ENCODE measurements at regions of chr3 and their contacts with region 1.

Region 1: DNA sequence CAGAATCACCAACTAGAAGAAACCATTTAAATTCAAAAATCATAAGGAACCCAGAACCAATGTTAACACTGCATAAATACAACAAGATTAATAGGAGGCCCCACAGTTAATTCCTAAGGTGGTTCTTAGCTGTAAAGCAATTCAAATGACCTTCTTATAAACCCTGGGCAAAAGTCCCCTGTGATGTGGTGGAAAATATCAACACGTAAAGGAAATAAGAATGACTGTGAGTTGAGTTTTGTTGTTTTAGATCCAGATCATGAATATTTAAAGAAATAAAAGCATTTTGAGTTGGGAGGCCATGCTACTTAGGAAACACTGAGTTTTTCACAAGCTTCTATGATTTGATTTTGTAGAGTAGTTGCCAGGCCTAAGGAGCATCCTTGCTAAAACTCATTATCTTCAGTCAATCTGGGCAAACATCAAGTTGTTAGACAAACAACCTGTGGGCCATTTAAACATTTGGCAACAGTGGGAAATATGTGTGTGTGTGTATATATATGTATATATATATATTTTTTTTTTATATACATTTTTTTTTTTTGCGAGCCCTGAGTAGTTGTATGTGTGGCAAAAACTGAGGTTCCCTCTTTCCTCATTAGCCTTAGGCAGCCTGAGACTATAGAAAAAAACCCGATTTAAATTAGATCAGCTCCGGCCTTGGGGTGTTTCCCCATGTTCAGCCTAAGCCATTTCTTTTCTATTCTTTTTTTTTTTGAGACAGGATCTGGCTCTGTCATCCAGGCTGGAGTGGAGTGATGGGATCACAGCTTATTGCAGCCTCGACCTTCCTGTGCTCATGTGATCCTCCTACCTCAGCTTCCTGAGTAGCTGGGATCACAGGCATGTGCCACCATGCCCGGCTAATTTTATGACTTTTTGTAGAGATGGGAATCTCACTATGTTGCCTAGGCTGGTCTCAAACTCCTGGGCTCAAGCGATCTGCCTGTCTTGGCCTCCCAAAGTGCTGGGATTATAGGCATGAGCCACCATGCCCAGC is 8.0 kb upstream of the PXK start:
- DNase-seq: no peak
- H3K4me3 ChIP-seq: no peak overlapping the region
- H3K4me3 Mint-ChIP-seq: no peak overlapping the region
- H3K27ac ChIP-seq: no peak overlapping the region
- H3K27ac Mint-ChIP-seq: peak overlapping the region in 2 of 7 donors; percentile 10 to 11
- H3K4me1 ChIP-seq: no peaks in the 10 kb centered on the region
- H3K4me1 Mint-ChIP-seq: peaks cover 5% of the 10 kb centered on the region
- H3K27me3 ChIP-seq: no peaks in the 10 kb centered on the region
- H3K27me3 Mint-ChIP-seq: peaks cover 0 to 2% (median 0%) of the 10 kb centered on the region in 3 donors
- CTCF ChIP-seq: no peak

Region 2: DNA sequence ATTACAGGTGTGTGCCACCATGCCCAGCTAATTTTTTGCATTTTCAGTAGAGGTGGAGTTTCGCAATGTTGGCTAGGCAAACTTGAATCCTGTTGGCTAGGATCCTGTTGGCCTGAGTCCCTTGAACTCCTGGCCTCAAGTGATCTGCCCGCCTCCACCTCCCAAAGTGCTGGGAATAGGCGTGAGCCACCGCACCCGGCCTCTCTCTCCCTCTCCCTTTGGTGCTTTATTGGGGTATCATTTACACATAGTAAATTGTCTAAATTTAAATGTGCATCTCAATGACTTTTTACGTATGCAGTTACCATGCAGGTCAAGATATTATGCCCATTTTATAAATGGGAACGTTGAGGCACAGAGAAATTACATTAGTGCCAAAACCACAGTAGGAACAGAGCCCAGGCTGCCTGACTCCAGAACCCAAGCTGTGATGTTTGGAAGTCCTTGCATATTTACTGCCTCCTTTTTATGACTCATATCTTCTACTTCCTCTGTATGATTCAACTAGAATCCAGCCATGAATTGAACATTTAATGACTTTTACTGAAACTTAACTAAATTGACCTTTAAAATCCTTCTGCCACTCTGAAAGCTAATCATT is 52.7 kb before region 1 on chr3:
- intact Hi-C with region 1: no loop called
- DNase-seq: peak; percentile 57 to 71 (median 60)
- H3K4me3 ChIP-seq: no peak overlapping the region
- H3K4me3 Mint-ChIP-seq: no peak overlapping the region
- H3K27ac ChIP-seq: peak overlapping the region; percentile 38 to 75
- H3K27ac Mint-ChIP-seq: peak overlapping the region; percentile 78 to 91 (median 85)
- H3K4me1 ChIP-seq: peaks cover 28 to 33% of the 10 kb centered on the region in 2 donors
- H3K4me1 Mint-ChIP-seq: peaks cover 34% of the 10 kb centered on the region
- H3K27me3 ChIP-seq: no peaks in the 10 kb centered on the region
- H3K27me3 Mint-ChIP-seq: peaks cover 0 to 2% (median 0%) of the 10 kb centered on the region in 3 donors
- CTCF ChIP-seq: no peak

Region 3: GRCh38 chr3:58392181-58392580 is 67.5 kb after region 1 on chr3:
- intact Hi-C with region 1: no loop called
- DNase-seq: no peak
- H3K4me3 ChIP-seq: no peak overlapping the region
- H3K4me3 Mint-ChIP-seq: no peak overlapping the region
- H3K27ac ChIP-seq: no peak overlapping the region
- H3K27ac Mint-ChIP-seq: no peak overlapping the region
- H3K4me1 ChIP-seq: peaks cover 3 to 5% of the 10 kb centered on the region in 2 donors
- H3K4me1 Mint-ChIP-seq: peaks cover 17% of the 10 kb centered on the region
- H3K27me3 ChIP-seq: no peaks in the 10 kb centered on the region
- H3K27me3 Mint-ChIP-seq: no peaks in the 10 kb centered on the region
- CTCF ChIP-seq: no peak

Region 4: DNA sequence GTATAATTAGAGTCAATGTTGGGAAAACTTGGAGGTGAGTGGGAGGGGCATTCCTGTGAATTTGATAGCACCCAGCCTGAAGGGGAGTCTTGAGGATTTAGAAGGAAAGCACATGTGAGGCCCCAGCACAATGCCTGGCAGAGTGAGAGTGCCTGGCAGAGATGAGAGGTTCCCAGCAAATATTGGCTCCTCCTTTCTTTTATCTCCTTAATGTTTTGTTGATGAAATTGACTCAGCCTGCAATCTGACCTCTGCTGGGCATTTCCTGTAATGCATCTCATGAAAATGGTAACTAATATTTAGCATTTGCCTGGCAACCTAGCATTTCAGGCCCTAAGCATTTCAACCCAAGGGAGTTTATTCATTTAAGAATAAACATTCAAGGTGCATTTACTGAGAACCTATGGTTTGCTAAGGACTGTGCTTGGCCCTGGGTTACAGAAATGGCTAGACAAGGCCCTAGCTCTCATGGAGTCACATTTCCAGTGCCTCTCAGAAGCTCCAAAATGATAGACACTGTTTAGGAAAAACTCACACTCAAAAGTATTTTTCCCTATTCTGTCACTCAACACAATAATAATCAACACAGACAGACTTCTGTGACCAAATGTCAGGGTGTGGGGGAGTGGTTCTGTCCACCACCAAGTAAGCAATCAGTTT is 90.0 kb after region 1 on chr3:
- intact Hi-C with region 1: loop called (anchors 2 to 5 kb)
- DNase-seq: peak; percentile 46 to 58 (median 47)
- H3K4me3 ChIP-seq: no peak overlapping the region
- H3K4me3 Mint-ChIP-seq: no peak overlapping the region
- H3K27ac ChIP-seq: peak overlapping the region in 1 of 2 donors; percentile 53
- H3K27ac Mint-ChIP-seq: peak overlapping the region in 2 of 7 donors; percentile 3 to 82
- H3K4me1 ChIP-seq: peaks cover 0 to 3% of the 10 kb centered on the region in 2 donors
- H3K4me1 Mint-ChIP-seq: peaks cover 11% of the 10 kb centered on the region
- H3K27me3 ChIP-seq: no peaks in the 10 kb centered on the region
- H3K27me3 Mint-ChIP-seq: peaks cover 0 to 1% (median 0%) of the 10 kb centered on the region in 3 donors
- CTCF ChIP-seq: peak; percentile 74

Measured in CD14-positive monocyte (primary cell).